HCT116 (cell line): ENCODE measurements at regions of chr13 and their contacts with region 1.

Region 1: GRCh38 chr13:73090116-73090811 is 31.5 kb downstream of the KLF5 start:
- DNase-seq: peak; percentile 96
- ATAC-seq: peak; percentile 91
- H3K4me3 ChIP-seq: peak overlapping the region; percentile 7 to 22; a peak in 3 of 4 replicates
- H3K27ac ChIP-seq: peak overlapping the region; percentile 93
- H3K4me1 ChIP-seq: peaks cover 26 to 46% of the 10 kb centered on the region in 2 experiments
- H3K27me3 ChIP-seq: no peaks in the 10 kb centered on the region
- CTCF ChIP-seq: no peak
- POLR2A ChIP-seq: no peak
- RAD21 ChIP-seq: peak; percentile 26; the same call in 1 of the 2 replicates

Region 2: DNA sequence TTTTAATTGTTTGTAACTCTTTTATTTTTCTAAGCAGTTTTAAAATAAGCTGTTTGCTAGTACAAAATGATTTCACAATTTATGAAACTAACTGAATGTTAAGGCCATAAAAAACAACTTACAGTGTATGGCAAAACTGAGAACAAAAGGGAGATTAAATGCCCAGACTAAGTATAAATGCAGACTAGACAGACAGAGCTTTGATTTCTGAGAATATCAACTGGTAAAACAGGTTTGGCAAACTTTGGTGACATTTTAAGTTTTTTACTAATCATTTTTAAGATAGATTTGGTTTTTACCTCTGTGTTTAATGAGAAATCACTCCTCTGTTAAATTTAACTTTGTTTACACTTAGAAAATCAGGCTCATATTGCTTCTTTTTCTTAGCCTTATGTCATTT is 159.0 kb before region 1 on chr13:
- CTCF ChIA-PET with region 1: no interaction called
- POLR2A ChIA-PET with region 1: no interaction called
- RAD21 ChIA-PET with region 1: no interaction called
- intact Hi-C with region 1: no loop called
- DNase-seq: no peak
- ATAC-seq: no peak
- H3K4me3 ChIP-seq: no peak overlapping the region
- H3K27ac ChIP-seq: no peak overlapping the region
- H3K4me1 ChIP-seq: peaks cover 0 to 3% of the 10 kb centered on the region in 2 experiments; a peak in 2 of 4 replicates
- H3K27me3 ChIP-seq: no peaks in the 10 kb centered on the region
- CTCF ChIP-seq: no peak
- POLR2A ChIP-seq: no peak
- RAD21 ChIP-seq: no peak

Region 3: DNA sequence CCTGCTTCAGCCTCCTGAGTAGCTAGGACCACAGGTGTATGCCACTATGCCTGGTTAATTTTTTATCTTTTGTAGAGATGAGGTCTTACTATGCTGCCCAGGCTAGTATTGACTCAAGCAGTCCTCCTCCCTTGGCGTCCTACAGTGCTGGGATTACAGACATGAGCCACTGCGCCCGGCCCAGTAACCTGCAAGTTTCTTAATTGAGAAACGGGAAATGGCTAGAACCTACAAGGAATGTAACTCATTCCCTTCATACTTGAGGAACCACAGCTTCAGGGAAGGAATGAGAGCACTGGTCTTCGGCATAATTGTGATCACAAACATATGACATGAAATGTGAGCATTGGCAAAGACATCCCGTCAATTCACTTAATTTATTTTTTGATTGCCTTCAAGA is 125.5 kb after region 1 on chr13:
- CTCF ChIA-PET with region 1: no interaction called
- POLR2A ChIA-PET with region 1: no interaction called
- RAD21 ChIA-PET with region 1: no interaction called
- intact Hi-C with region 1: loop called (anchors 10 kb)
- DNase-seq: no peak
- ATAC-seq: peak; percentile 36; the same call in 1 of the 2 replicates
- H3K4me3 ChIP-seq: no peak overlapping the region
- H3K27ac ChIP-seq: no peak overlapping the region
- H3K4me1 ChIP-seq: peaks cover 7 to 9% of the 10 kb centered on the region in 2 experiments
- H3K27me3 ChIP-seq: no peaks in the 10 kb centered on the region
- CTCF ChIP-seq: no peak
- POLR2A ChIP-seq: no peak
- RAD21 ChIP-seq: no peak

Region 4: GRCh38 chr13:73325711-73326558 is 235.7 kb after region 1 on chr13:
- CTCF ChIA-PET with region 1: no interaction called
- POLR2A ChIA-PET with region 1: no interaction called
- RAD21 ChIA-PET with region 1: no interaction called
- intact Hi-C with region 1: loop called (anchors 10 kb)
- DNase-seq: no peak
- ATAC-seq: peak; percentile 81
- H3K4me3 ChIP-seq: peak overlapping the region; percentile 15 to 47
- H3K27ac ChIP-seq: peak overlapping the region; percentile 62
- H3K4me1 ChIP-seq: peaks cover 8 to 27% of the 10 kb centered on the region in 2 experiments
- H3K27me3 ChIP-seq: no peaks in the 10 kb centered on the region
- CTCF ChIP-seq: no peak
- POLR2A ChIP-seq: no peak
- RAD21 ChIP-seq: no peak